ENCODE measurements at regions of chr16 and their contacts with region 1.

Region 1: DNA sequence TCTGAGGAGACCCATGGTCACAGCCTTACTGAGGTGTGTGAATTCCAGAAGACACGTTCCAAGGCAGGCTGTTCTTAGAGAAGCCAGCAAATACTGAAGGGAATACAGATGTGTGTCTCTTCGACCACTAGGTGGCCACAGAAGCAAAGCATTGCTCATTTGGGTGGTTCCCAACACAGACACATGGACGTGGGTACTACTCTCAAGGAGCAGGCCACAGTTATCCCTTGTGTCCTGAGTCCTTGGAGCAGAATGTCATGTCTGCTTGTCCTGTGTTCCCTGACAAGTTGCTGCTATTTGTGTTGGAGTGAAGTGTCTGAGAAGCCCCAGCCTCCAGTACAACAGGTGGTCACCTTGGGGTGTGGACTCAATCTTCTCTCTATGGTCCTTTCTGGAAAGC is 30.3 kb downstream of the HMOX2 start:
- DNase-seq: no peak
- ATAC-seq: peak; percentile 71

Region 2: DNA sequence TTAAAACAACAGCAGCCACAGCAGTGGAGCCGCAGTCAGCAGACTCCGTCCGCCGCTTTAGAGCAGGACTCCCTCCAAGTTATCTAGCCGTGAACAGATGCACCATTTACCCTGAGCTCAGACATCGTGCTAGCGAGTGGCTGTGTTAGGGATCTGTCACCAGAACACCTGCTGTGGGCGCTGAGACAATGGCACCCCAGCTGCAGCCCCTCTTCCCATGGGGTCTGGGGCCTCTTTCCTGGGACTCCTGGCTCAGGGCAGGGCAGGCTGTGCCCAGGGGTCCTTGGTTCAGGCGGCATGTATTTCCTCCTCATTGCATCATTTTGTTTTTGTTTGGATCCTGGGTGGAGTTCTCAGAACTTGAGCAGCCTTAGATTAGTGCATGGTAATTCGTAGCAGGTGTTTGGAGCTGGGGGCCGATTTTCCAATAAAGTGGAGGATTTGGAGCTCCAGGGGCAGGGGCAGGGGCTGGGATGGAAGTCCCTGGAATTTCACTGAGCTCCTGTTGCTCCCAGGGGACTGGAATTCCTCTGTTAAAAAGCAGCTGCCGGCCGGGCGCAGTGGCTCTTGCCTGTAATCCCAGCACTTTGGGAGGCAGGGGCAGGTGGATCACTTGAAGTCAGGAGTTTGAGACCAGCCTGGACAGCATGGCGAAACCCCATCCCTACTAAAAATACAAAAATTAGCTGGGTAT is 55.4 kb before region 1 on chr16:
- intact Hi-C with region 1: no loop called
- DNase-seq: no peak
- ATAC-seq: no peak

Region 3: GRCh38 chr16:4556112-4556511 is 49.7 kb after region 1 on chr16 and contains the start of gene C16orf96:
- intact Hi-C with region 1: loop called (anchors 10 kb)
- DNase-seq: no peak
- ATAC-seq: no peak
- total RNA-seq, gene C16orf96: 0.07 TPM

Measured in left ventricle myocardium superior (tissue), 1 donor.